ENCODE measurements at regions of chr2 and their contacts with region 1.

Region 1: DNA sequence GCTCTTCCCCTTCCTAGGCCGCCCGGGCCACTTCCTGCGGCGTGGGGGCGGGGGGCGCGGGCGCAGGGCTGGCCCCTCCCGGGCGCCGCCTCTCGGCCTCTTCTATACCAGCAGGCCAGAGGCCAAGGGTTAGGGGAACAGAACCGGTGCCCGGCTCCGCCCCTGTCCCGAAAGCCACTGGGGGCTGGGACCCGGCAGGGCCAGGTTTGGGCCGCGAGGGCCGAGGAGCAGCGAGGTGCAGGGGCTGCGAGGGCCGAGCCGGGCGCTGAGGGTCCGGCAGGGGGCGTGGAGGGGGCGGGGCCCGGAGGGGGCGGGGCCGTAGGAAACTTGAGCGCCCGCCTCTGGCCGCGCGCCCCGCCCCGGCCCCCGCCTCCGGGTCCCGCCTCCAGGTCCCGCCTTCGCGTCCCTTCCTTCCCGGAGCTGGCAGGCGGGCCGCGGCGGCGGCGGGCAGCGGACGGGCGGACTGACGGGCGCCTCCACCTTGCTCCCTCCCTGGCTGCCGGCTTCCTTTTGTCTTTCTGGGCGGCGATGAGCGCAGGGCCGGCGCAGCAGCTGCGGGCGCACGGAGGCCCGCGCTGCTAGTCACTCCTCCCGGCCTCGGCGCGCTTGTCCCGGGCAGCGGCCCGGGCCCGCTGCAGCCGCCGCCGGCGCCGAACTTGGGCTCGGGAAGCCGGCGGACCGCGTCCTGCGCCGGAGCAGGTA is at the start of gene HPCAL1:
- DNase-seq: peak; percentile 100
- H3K4me3 ChIP-seq: peak within 1 kb of the TSS; percentile 64 to 80
- H3K27ac ChIP-seq: peak within 1 kb of the TSS; percentile 15 to 85; a peak in 3 of 4 replicates
- H3K4me1 ChIP-seq: peaks cover 11 to 59% of the 10 kb centered on the region in 2 experiments
- H3K27me3 ChIP-seq: no peaks in the 10 kb centered on the region
- CTCF ChIP-seq: peak; percentile 63
- EP300 ChIP-seq: no peak
- RAD21 ChIP-seq: peak; percentile 34; the same call in 1 of the 2 replicates
- polyA plus RNA-seq, gene HPCAL1: 34.6 and 77.0 TPM in 2 replicates

Region 2: DNA sequence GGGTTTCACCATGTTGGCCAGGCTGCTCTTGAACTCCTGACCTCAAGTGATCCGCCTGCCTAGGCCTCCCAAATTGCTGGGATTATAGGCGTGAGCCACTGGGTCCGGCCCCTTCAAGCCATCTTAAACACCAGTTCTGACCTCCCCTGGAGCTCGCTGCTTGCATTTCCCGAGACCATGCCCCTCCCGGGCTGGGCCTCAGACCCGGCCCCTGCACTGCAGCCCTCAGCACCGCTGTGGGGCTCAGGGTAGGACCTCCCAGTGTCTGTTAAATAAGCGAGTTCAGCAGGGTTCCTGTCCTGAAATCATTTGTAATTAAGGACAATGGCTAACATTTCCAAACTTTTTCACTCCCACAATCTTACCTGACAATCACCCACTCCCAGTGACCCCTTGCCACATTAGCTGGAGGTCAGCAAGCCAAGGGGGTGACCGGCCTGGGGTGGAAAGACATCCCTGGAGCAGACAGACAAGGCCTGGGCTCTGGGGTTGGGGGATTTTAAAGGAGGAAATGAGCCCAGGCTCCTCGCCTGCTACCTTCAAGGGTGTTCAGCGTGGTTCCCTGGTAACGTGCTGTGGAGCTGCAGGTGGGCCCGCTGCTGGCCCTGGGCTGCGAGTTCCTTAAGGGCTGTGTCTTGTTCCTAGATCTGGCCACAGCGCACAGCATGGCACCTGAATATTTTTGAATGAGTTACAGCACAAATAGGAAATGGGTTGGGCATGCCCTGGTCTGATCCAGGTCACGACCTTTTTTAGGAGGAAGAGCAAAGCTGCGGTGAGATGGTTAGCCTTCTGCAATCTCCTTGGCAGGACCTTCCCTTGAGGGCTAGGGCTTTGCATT is 237.5 kb before region 1 on chr2:
- CTCF ChIA-PET with region 1: no interaction called
- POLR2A ChIA-PET with region 1: no interaction called
- DNase-seq: no peak
- H3K4me3 ChIP-seq: no peak overlapping the region
- H3K27ac ChIP-seq: no peak overlapping the region
- H3K4me1 ChIP-seq: peaks cover 0 to 8% of the 10 kb centered on the region in 2 experiments; a peak in 1 of 4 replicates
- H3K27me3 ChIP-seq: no peaks in the 10 kb centered on the region
- CTCF ChIP-seq: no peak
- EP300 ChIP-seq: no peak
- RAD21 ChIP-seq: no peak

Region 3: DNA sequence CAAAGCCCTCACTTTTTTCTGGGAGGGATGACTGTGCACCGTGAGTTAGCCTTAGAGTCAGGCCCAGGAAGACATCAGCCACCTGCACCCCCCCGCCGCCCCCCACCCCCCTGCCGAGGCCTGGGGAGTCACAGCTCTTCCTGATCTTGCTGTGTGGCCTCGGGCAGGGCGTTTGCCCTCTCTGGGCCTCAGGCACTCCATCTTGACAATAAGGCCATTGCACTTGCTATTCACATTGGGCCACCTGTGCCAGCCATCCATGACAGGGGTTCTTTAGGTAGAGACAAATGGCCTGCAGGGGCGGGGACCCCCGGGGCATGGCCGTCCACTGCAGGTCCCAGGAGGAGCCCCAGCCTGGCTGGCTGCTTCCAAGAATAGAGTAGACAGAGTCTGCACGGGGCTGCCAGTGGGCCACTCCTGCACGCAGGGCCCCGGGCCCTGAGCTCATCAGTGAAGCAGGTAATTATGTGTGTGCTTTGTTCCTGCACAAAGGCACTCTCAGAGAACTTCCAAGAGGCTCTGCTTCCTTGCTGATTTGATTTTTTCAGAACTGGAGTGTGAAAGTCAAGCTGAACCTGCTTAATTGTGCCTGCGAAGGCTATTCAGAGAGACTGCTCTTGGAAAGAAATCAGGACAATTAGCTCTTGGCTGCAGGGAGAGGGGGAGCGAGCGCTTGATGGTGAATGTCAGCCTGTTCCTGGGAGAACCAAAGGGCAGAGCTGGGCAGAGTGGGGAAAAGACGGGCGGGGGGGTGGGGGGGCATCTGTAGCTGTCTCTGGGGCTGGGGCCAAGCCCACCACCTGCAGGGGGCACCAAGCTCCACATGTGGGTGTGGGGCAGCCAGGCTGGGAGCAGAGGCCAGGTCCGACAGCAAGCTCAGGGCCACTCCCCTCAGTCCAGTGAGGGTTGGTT is 139.8 kb before region 1 on chr2:
- CTCF ChIA-PET with region 1: interaction called, 14 read pairs
- POLR2A ChIA-PET with region 1: interaction called, 5 read pairs
- DNase-seq: peak; percentile 81
- H3K4me3 ChIP-seq: no peak overlapping the region
- H3K27ac ChIP-seq: peak overlapping the region in 1 of 2 experiments; percentile 39; a peak in 1 of 4 replicates
- H3K4me1 ChIP-seq: peaks cover 0 to 47% of the 10 kb centered on the region in 2 experiments; a peak in 1 of 4 replicates
- H3K27me3 ChIP-seq: no peaks in the 10 kb centered on the region
- CTCF ChIP-seq: no peak
- EP300 ChIP-seq: no peak
- RAD21 ChIP-seq: peak; percentile 51

Region 4: DNA sequence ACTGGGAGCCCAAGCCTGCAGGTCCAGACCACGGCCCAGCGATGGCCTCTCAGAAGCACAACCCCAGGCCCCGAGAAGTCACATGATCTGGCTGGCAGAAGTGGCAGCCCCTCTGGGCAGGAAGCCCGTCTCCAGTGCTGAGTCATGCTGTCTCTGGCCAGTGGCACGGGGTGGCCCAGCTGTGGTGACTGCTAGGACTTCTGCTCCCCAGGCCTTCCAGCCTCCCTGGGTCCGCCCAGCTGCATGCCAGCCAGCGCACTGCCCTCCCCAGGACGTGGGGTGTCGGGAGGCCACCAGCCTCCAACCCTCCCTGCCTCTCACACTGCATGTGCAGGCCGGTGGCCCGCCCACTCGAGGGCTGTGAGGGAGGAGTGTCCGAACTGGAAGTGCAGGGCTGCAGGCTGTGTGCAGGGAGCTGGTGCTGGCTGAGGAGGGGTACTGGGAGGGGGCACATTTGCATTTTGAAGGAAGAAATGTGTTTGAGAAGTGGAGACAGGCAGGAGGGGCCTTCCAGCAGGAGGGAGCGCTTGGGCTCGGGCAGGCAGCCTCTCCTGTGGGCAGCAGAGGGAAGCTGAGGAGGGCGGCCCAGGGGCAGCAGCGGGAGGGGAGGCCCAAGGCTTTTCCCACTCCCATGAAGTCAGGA is 17.0 kb before region 1 on chr2:
- CTCF ChIA-PET with region 1: interaction called, 56 read pairs
- POLR2A ChIA-PET with region 1: interaction called, 23 read pairs
- DNase-seq: peak; percentile 95
- H3K4me3 ChIP-seq: no peak overlapping the region
- H3K27ac ChIP-seq: peak overlapping the region; percentile 69 to 96
- H3K4me1 ChIP-seq: peaks cover 43 to 52% of the 10 kb centered on the region in 2 experiments
- H3K27me3 ChIP-seq: no peaks in the 10 kb centered on the region
- CTCF ChIP-seq: peak; percentile 17
- EP300 ChIP-seq: peak in 1 of 2 experiments; percentile 81; a peak in 1 of 4 replicates
- RAD21 ChIP-seq: no peak; the same call in none of the 2 replicates

Region 5: GRCh38 chr2:10331027-10331701 is 28.5 kb after region 1 on chr2:
- CTCF ChIA-PET with region 1: interaction called, 17 read pairs
- POLR2A ChIA-PET with region 1: no interaction called
- DNase-seq: no peak
- H3K4me3 ChIP-seq: no peak overlapping the region
- H3K27ac ChIP-seq: peak overlapping the region in 1 of 2 experiments; percentile 50; a peak in 2 of 4 replicates
- H3K4me1 ChIP-seq: peaks cover 23 to 68% of the 10 kb centered on the region in 2 experiments
- H3K27me3 ChIP-seq: no peaks in the 10 kb centered on the region
- CTCF ChIP-seq: no peak
- EP300 ChIP-seq: no peak
- RAD21 ChIP-seq: no peak

Measured in SK-N-SH (cell line).